MCF 10A (cell line): ENCODE measurements at regions of chr4 and their contacts with region 1.

Region 1: GRCh38 chr4:137861682-137862081 is 329.4 kb upstream of the PCDH18 start:
- DNase-seq: peak; percentile 22
- H3K4me3 Mint-ChIP-seq: no peak overlapping the region
- H3K27ac Mint-ChIP-seq: no peak overlapping the region
- H3K4me1 Mint-ChIP-seq: no peaks in the 10 kb centered on the region
- H3K27me3 Mint-ChIP-seq: no peaks in the 10 kb centered on the region
- CTCF ChIP-seq: peak; percentile 47

Region 2: GRCh38 chr4:137124278-137124932 is 737.3 kb before region 1 on chr4:
- CTCF ChIA-PET with region 1: interaction called, 5 read pairs
- POLR2A ChIA-PET with region 1: no interaction called
- intact Hi-C with region 1: loop called (anchors 1 kb)
- DNase-seq: peak; percentile 77
- H3K4me3 Mint-ChIP-seq: peak overlapping the region; percentile 72
- H3K27ac Mint-ChIP-seq: peak overlapping the region; percentile 41
- H3K4me1 Mint-ChIP-seq: peaks cover 5% of the 10 kb centered on the region
- H3K27me3 Mint-ChIP-seq: no peaks in the 10 kb centered on the region
- CTCF ChIP-seq: peak; percentile 60

Region 3: GRCh38 chr4:137762591-137762990 is 99.1 kb before region 1 on chr4:
- CTCF ChIA-PET with region 1: no interaction called
- POLR2A ChIA-PET with region 1: no interaction called
- intact Hi-C with region 1: no loop called
- DNase-seq: no peak
- H3K4me3 Mint-ChIP-seq: no peak overlapping the region
- H3K27ac Mint-ChIP-seq: no peak overlapping the region
- H3K4me1 Mint-ChIP-seq: no peaks in the 10 kb centered on the region
- H3K27me3 Mint-ChIP-seq: no peaks in the 10 kb centered on the region
- CTCF ChIP-seq: no peak